Activated naive CD4-positive, alpha-beta T cell treated with anti-CD3 and anti-CD28 coated beads for 36 hours (primary cell): ENCODE measurements at regions of chr2 and their contacts with region 1.

Region 1: GRCh38 chr2:237427769-237428506 is 14.0 kb upstream of the COL6A3 start:
- DNase-seq: peak; percentile 94
- H3K4me3 Mint-ChIP-seq: no peak overlapping the region
- H3K27ac Mint-ChIP-seq: peak overlapping the region; percentile 72
- H3K4me1 Mint-ChIP-seq: peaks cover 80% of the 10 kb centered on the region
- H3K27me3 Mint-ChIP-seq: peaks cover 7% of the 10 kb centered on the region

Region 2: DNA sequence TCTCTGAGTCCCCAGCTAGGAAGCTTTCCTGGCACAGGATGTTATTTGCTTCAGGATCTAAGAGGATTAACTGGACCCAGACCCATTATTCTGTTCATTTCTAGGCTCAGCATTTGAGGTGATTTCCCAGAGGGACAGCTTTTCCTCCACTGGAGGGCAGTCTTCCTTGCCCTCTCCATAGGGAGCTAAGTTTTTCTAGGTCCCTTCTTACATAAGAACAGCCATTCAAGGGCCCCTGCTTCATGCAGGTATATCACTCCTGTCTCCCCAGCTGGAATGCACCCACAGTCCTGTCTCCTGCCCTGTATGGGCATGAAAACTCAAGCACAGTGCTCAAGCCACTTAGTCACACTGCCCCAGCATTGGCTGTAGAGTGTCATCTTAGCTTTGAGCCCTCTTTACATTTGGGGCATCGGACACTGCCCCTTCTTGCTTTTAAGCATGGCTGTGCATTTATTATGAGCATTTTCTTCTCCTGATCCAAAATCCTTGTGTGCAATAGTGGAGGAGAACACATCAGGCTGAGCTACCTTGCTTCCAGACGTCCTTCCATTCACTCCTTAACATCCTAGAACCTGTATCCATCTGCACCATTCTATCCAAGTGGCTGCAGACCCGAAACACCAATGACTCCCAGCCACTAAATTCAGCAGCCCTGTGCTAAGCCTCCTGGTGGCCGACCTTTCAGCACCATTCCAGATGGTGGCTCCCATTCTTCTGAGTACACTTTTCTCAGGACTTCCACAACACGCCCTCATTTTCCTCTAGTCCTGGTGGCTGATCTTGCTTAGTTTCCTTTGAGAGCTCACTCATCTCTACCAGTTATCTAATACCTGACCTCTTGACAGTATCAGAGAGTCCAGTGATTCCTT is 262.3 kb before region 1 on chr2:
- CTCF ChIA-PET with region 1: no interaction called
- intact Hi-C with region 1: no loop called
- DNase-seq: no peak
- H3K4me3 Mint-ChIP-seq: no peak overlapping the region
- H3K27ac Mint-ChIP-seq: no peak overlapping the region
- H3K4me1 Mint-ChIP-seq: no peaks in the 10 kb centered on the region
- H3K27me3 Mint-ChIP-seq: peaks cover 2% of the 10 kb centered on the region

Region 3: GRCh38 chr2:237291138-237291792 is 136.7 kb before region 1 on chr2:
- CTCF ChIA-PET with region 1: no interaction called
- intact Hi-C with region 1: loop called (anchors 5 kb)
- DNase-seq: peak; percentile 68
- H3K4me3 Mint-ChIP-seq: peak overlapping the region; percentile 45
- H3K27ac Mint-ChIP-seq: peak overlapping the region; percentile 11
- H3K4me1 Mint-ChIP-seq: peaks cover 9% of the 10 kb centered on the region
- H3K27me3 Mint-ChIP-seq: peaks cover 31% of the 10 kb centered on the region

Region 4: GRCh38 chr2:237558906-237559641 is 131.1 kb after region 1 on chr2:
- CTCF ChIA-PET with region 1: interaction called, 4 read pairs
- intact Hi-C with region 1: loop called (anchors 2 kb)
- DNase-seq: no peak
- H3K4me3 Mint-ChIP-seq: no peak overlapping the region
- H3K27ac Mint-ChIP-seq: no peak overlapping the region
- H3K4me1 Mint-ChIP-seq: peaks cover 13% of the 10 kb centered on the region
- H3K27me3 Mint-ChIP-seq: peaks cover 7% of the 10 kb centered on the region